Heart left ventricle (tissue), 16 donors: ENCODE measurements at regions of chr17 and their contacts with region 1.

Region 1: DNA sequence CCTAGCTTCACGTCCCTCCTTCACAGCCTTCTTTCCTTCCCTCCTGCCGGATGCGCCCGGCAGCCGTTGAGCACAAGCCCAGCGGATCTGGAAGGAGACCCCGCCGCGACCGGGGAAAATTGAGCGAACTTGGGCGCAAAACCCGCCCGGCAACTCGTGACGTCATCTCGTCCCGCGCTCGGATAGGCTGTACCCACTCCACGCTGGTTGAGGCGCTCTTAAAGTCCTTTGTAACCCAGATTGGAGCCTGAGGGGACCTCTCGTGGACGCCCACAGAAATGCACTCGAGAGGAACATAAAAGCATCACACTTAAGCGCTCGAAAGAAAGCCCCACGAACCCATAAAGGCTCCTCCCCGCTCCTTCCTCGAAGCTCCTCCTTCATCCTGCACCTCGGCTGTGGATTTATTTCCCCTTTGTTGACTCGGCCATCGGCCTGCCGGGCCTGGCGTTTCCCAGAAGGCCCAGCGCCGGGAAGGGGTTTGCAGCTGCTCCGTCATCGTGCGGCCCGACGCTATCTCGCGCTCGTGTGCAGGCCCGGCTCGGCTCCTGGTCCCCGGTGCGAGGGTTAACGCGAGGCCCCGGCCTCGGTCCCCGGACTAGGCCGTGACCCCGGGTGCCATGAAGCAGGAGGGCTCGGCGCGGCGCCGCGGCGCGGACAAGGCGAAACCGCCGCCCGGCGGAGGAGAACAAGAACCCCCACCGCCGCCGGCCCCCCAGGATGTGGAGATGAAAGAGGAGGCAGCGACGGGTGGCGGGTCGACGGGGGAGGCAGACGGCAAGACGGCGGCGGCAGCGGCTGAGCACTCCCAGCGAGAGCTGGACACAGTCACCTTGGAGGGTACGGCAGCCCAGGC is at the start of gene PSMD3:
- DNase-seq: peak; percentile 98
- ATAC-seq: peak; percentile 96 to 99 (median 98)
- H3K4me3 ChIP-seq: peak within 1 kb of the TSS; percentile 74 to 100 (median 95)
- H3K27ac ChIP-seq: peak within 1 kb of the TSS; percentile 70 to 99 (median 92)
- H3K4me1 ChIP-seq: peaks cover 7 to 34% (median 23%) of the 10 kb centered on the region in 12 donors
- H3K27me3 ChIP-seq: peaks cover 0 to 3% (median 0%) of the 10 kb centered on the region in 9 donors
- CTCF ChIP-seq: peak; percentile 66 to 94 (median 80)
- POLR2A ChIP-seq: peak; percentile 15 to 86
- total RNA-seq, gene PSMD3: 68.9 to 117 (median 83.3) TPM

Region 2: DNA sequence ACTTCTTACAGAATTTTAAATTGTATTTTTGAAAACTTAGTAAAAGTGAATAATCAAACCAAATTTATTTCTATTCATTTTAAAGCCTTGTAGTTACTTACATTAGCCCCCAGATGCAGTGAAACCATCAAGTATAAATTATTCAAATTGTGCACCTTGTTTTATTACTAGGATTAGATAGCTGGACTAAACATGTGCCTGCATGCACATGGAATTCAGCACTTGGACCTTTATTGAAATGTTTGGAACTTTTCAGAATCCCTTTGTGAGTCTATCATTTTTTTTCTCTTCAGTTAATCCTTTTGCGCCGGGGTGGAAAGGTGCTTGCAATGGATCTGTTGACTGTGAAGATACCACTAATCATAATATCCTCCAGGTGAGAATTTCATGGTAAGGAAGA is 107.8 kb before region 1 on chr17:
- intact Hi-C with region 1: loop called in 4 of 10 experiments (anchors 2 to 10 kb)
- DNase-seq: no peak
- ATAC-seq: no peak
- H3K4me3 ChIP-seq: no peak overlapping the region
- H3K27ac ChIP-seq: no peak overlapping the region
- H3K4me1 ChIP-seq: no peaks in the 10 kb centered on the region
- H3K27me3 ChIP-seq: peaks cover 5 to 63% (median 11%) of the 10 kb centered on the region in 9 donors
- CTCF ChIP-seq: peak in 5 of 12 donors; percentile 14 to 51 (median 32)
- POLR2A ChIP-seq: no peak

Region 3: GRCh38 chr17:39952680-39953470 is 27.7 kb before region 1 on chr17:
- intact Hi-C with region 1: loop called in 2 of 10 experiments (anchors 1 to 2 kb)
- DNase-seq: peak; percentile 98 to 99 (median 98)
- ATAC-seq: peak; percentile 92 to 95 (median 94)
- H3K4me3 ChIP-seq: peak overlapping the region in 10 of 12 donors; percentile 26 to 62 (median 48)
- H3K27ac ChIP-seq: peak overlapping the region in 10 of 12 donors; percentile 2 to 78 (median 60)
- H3K4me1 ChIP-seq: peaks cover 0 to 33% (median 13%) of the 10 kb centered on the region in 12 donors
- H3K27me3 ChIP-seq: no peaks in the 10 kb centered on the region
- CTCF ChIP-seq: no peak
- POLR2A ChIP-seq: peak in 1 of 2 donors; percentile 35

Region 4: GRCh38 chr17:39963829-39964228 is 16.8 kb before region 1 on chr17:
- intact Hi-C with region 1: loop called in 6 of 10 experiments (anchors 1 to 2 kb)
- DNase-seq: no peak
- ATAC-seq: no peak
- H3K4me3 ChIP-seq: no peak overlapping the region
- H3K27ac ChIP-seq: no peak overlapping the region
- H3K4me1 ChIP-seq: peaks cover 0 to 27% (median 1%) of the 10 kb centered on the region in 12 donors
- H3K27me3 ChIP-seq: peaks cover 0 to 10% (median 0%) of the 10 kb centered on the region in 9 donors
- CTCF ChIP-seq: no peak
- POLR2A ChIP-seq: no peak